ENCODE measurements at regions of chr2 and their contacts with region 1.

Region 1: GRCh38 chr2:11320698-11321492 is 23.5 kb downstream of the ROCK2 start:
- DNase-seq: no peak
- ATAC-seq: no peak
- H3K4me3 ChIP-seq: no peak overlapping the region
- H3K27ac ChIP-seq: no peak overlapping the region
- H3K4me1 ChIP-seq: no peaks in the 10 kb centered on the region
- H3K27me3 ChIP-seq: no peaks in the 10 kb centered on the region

Region 2: GRCh38 chr2:11254100-11254536 is 66.8 kb before region 1 on chr2:
- intact Hi-C with region 1: loop called in 1 of 2 experiments (anchors 10 kb)
- DNase-seq: no peak
- ATAC-seq: no peak
- H3K4me3 ChIP-seq: no peak overlapping the region
- H3K27ac ChIP-seq: no peak overlapping the region
- H3K4me1 ChIP-seq: peaks cover 0 to 3% of the 10 kb centered on the region in 2 donors
- H3K27me3 ChIP-seq: no peaks in the 10 kb centered on the region

Region 3: DNA sequence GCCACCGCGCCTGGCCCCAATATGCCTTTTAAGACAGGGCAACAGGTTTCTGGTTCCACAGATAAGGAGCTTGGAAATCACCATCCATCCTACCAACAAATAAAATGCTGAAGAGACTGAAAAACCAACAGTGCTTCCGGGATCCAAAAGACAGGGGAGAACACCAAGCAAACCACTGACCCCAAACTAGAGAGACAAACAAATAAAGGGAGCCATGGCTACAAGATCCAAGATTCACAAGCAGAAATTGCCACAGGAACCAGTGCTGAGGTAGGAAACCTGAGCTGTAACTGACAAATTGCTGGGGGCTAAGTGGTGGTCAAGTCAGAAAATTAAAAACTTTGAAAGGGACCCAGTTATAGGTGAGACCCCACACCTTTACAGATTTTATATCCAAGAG is 53.0 kb before region 1 on chr2:
- intact Hi-C with region 1: loop called in 1 of 2 experiments (anchors 10 kb)
- DNase-seq: no peak
- ATAC-seq: no peak
- H3K4me3 ChIP-seq: no peak overlapping the region
- H3K27ac ChIP-seq: no peak overlapping the region
- H3K4me1 ChIP-seq: peaks cover 1 to 3% of the 10 kb centered on the region in 2 donors
- H3K27me3 ChIP-seq: no peaks in the 10 kb centered on the region

Measured in aorta (tissue), 5 donors.